Activated B cell treated with CpG ODN at 0.5 μM for 24 hours (primary cell): ENCODE measurements at regions of chr15 and their contacts with region 1.

Region 1: GRCh38 chr15:22936577-22937472 is 43.3 kb downstream of the CYFIP1 start:
- DNase-seq: no peak
- ATAC-seq: peak; percentile 89
- H3K4me3 Mint-ChIP-seq: peak overlapping the region; percentile 58
- H3K27ac Mint-ChIP-seq: peak overlapping the region; percentile 65
- H3K4me1 Mint-ChIP-seq: peaks cover 45% of the 10 kb centered on the region
- H3K27me3 Mint-ChIP-seq: no peaks in the 10 kb centered on the region
- CTCF ChIP-seq: no peak

Region 2: DNA sequence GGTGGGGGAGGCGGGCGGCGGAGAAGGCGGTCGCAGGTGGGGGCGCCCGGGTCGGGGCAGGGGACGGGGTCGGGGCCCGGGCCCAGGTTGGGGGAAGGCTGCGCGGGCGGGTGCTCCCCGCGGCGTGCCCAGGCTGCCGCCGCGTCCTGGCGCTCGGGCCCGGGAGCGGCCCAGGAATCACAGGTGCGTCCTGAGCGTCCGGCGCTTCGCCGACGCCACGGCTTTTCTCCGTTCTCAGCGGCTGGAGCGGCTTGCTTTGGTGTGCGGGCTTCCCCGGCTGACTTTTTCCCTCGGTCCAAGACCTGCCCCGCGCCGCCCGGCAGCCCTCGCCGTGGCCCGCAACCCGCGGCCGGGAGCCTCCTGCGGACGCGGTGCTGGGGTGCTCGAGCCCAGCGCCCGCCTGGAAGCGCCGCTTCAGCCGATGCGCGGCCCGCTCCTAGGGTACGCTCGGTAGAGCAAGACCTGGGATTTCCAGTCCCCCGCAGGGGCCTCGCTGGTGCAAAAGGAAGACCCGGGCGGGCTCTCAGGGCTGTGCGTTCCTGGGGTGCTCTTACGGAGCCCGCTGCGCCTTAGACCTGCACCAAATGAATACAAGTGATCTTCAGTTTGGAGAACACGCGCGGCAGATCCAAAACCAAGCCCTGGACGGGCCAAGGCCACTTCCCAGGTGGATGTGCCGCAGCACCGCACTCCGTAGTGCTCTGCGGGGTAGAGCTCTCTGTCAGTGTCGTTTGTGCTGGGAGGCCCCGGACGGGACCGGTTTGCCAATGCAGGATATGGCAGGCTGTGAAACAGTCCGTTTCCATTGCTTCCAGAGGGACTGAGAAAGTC is 149.7 kb before region 1 on chr15:
- CTCF ChIA-PET with region 1: no interaction called
- POLR2A ChIA-PET with region 1: interaction called, 19 read pairs
- intact Hi-C with region 1: loop called (anchors 10 kb)
- DNase-seq: peak; percentile 52
- ATAC-seq: peak; percentile 10
- H3K4me3 Mint-ChIP-seq: peak overlapping the region; percentile 86
- H3K27ac Mint-ChIP-seq: peak overlapping the region; percentile 82
- H3K4me1 Mint-ChIP-seq: peaks cover 42% of the 10 kb centered on the region
- H3K27me3 Mint-ChIP-seq: no peaks in the 10 kb centered on the region
- CTCF ChIP-seq: no peak

Region 3: GRCh38 chr15:22866079-22866478 is 70.7 kb before region 1 on chr15:
- CTCF ChIA-PET with region 1: no interaction called
- POLR2A ChIA-PET with region 1: no interaction called
- intact Hi-C with region 1: loop called (anchors 10 kb)
- DNase-seq: no peak
- ATAC-seq: no peak
- H3K4me3 Mint-ChIP-seq: no peak overlapping the region
- H3K27ac Mint-ChIP-seq: no peak overlapping the region
- H3K4me1 Mint-ChIP-seq: peaks cover 2% of the 10 kb centered on the region
- H3K27me3 Mint-ChIP-seq: no peaks in the 10 kb centered on the region
- CTCF ChIP-seq: no peak

Region 4: DNA sequence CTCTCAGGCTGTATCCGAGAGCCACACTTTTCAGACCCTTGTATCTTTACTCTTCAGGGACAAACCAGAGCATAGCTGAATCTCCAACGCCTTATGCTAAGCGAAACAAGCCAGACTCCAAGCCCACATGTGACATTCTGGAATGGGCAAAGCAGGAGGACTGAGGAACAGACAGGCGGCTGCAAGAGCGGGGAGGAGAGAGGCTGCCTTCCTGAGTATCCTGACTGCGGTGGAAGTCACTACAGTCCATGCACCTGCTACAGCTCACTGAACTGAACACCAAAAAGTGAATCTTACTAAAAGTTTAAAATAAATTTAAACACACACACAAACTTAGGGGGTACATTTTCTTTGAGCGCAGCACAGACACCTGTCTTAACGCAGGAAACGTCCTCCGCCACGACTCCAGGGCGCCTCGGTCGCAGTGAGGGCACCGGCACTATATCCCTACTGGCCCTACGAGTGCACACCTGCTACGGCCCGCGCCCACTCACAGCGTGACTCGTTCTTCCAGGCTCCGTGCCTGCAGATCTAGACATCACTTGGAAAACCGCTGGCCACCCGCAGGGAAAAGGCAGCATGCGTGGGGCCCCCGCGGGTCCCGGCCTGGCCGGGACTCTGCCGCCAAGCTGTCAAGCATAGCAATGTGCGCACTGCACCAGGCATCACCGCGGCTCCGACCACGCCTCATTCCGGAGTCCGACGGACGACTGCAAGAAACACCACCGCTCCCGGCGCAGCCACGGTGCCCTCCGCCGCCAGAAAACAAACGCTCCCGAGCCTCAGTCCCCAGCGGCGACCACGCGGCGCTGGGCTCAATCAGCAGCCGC is 42.1 kb after region 1 on chr15:
- CTCF ChIA-PET with region 1: no interaction called
- POLR2A ChIA-PET with region 1: no interaction called
- intact Hi-C with region 1: loop called (anchors 2 kb)
- DNase-seq: peak; percentile 30
- ATAC-seq: peak; percentile 69
- H3K4me3 Mint-ChIP-seq: peak overlapping the region; percentile 83
- H3K27ac Mint-ChIP-seq: no peak overlapping the region
- H3K4me1 Mint-ChIP-seq: peaks cover 19% of the 10 kb centered on the region
- H3K27me3 Mint-ChIP-seq: peaks cover 8% of the 10 kb centered on the region
- CTCF ChIP-seq: no peak